ENCODE measurements at regions of chr12 and their contacts with region 1.

Region 1: GRCh38 chr12:101830367-101831325 is at the start of gene GNPTAB:
- DNase-seq: peak; percentile 92 to 97 (median 95)
- H3K4me3 ChIP-seq: peak within 1 kb of the TSS; percentile 58 to 93 (median 90)
- H3K27ac ChIP-seq: peak within 1 kb of the TSS in 4 of 5 donors; percentile 51 to 82 (median 66)
- H3K4me1 ChIP-seq: peaks cover 8 to 21% of the 10 kb centered on the region in 2 donors
- H3K27me3 ChIP-seq: no peaks in the 10 kb centered on the region
- CTCF ChIP-seq: peak; percentile 46 to 96 (median 74)
- POLR2A ChIP-seq: peak; percentile 62 to 74
- total RNA-seq, gene GNPTAB: 8.6 to 31.3 (median 19.4) TPM

Region 2: DNA sequence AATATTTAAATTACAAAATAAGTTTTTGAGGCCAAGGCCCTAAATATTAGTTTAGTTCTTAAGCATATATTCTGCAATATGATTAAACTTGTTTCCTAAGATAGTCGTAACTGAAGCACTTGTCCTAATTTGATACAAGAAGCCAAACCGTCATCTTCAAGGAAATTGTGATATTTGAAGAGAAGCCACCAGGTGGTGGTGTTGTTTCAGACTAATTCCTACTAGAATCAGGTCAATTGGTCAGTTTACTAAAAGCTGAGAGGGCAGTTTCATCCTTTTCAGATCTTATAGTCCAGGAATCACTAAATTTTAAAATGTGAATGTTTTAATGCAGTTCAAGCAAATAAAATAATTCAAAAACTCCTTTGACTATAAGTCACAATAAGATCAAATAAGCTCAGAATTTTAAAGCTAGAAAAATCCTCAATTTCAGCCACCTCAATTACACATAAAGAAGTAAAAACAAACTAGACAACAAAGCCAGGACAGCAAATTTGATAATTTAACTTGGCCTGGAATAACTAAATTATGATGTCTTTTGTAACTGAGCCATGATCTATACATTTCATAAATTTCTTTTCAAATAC is 416.0 kb before region 1 on chr12:
- intact Hi-C with region 1: loop called in 1 of 2 experiments (anchors 10 kb)
- DNase-seq: peak in 5 of 7 donors; percentile 17 to 66 (median 54)
- H3K4me3 ChIP-seq: no peak overlapping the region
- H3K27ac ChIP-seq: no peak overlapping the region
- H3K4me1 ChIP-seq: no peaks in the 10 kb centered on the region
- H3K27me3 ChIP-seq: no peaks in the 10 kb centered on the region
- CTCF ChIP-seq: peak; percentile 35 to 72 (median 60)
- POLR2A ChIP-seq: no peak

Region 3: GRCh38 chr12:101782273-101782731 is 48.3 kb before region 1 on chr12:
- intact Hi-C with region 1: no loop called
- DNase-seq: no peak
- H3K4me3 ChIP-seq: no peak overlapping the region
- H3K27ac ChIP-seq: no peak overlapping the region
- H3K4me1 ChIP-seq: no peaks in the 10 kb centered on the region
- H3K27me3 ChIP-seq: no peaks in the 10 kb centered on the region
- CTCF ChIP-seq: no peak
- POLR2A ChIP-seq: no peak

Measured in adrenal gland (tissue), 19 donors.